ENCODE measurements at regions of chr2 and their contacts with region 1.

Region 1: GRCh38 chr2:129548880-129549279 is 430.6 kb upstream of the RAB6C start:
- DNase-seq: no peak
- H3K4me3 ChIP-seq: no peak overlapping the region
- H3K27ac ChIP-seq: no peak overlapping the region
- H3K4me1 ChIP-seq: no peaks in the 10 kb centered on the region
- H3K27me3 ChIP-seq: no peaks in the 10 kb centered on the region
- CTCF ChIP-seq: no peak
- POLR2A ChIP-seq: no peak

Region 2: DNA sequence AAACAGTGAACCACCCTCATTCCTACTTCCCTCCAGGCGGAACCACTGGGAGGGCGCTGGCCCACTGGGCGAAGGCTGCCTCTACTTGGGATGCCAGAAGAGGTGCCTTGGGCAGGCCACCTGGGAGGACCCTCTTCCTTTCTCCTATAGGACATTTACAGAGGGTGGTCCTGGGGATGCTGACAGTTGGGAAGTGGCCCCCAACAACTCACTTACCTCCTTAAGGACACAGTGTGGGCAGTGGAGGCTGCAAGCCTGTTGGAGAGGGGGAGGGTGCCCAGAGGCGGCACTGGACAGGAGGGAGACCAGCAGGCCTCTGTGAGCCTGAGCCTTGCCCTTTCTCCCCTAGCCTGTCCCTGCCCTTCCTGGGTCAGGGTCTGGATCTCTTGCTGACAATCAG is 883.8 kb before region 1 on chr2:
- intact Hi-C with region 1: loop called (anchors 5 kb)
- DNase-seq: no peak
- H3K4me3 ChIP-seq: no peak overlapping the region
- H3K27ac ChIP-seq: no peak overlapping the region
- H3K4me1 ChIP-seq: no peaks in the 10 kb centered on the region
- H3K27me3 ChIP-seq: no peaks in the 10 kb centered on the region
- CTCF ChIP-seq: no peak
- POLR2A ChIP-seq: no peak

Region 3: DNA sequence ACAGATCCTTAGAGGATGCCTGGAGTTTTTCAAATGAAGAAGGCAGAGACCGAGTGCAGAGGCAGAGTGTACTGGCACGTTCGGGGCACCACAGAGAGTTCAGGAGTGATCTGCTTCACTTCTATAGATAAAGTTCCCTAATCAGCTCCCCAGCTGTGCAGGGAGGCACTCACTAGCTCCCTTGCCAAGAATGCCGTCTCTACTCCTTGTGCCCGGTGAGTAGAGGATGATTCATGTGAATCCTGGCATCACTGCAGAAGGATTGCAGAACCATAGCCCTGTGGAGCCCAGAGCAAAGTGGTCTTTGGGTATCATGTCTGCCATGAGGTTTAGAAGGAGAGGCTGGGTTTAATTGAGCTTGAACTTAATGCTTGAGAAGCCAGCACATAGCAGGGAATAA is 79.5 kb before region 1 on chr2:
- intact Hi-C with region 1: no loop called
- DNase-seq: no peak
- H3K4me3 ChIP-seq: no peak overlapping the region
- H3K27ac ChIP-seq: no peak overlapping the region
- H3K4me1 ChIP-seq: no peaks in the 10 kb centered on the region
- H3K27me3 ChIP-seq: no peaks in the 10 kb centered on the region
- CTCF ChIP-seq: no peak
- POLR2A ChIP-seq: no peak